ENCODE measurements at regions of chr9 and their contacts with region 1.

Region 1: GRCh38 chr9:133356391-133357091 is at the starts of genes SURF1 and SURF2:
- DNase-seq: peak; percentile 94
- ATAC-seq: peak; percentile 92
- H3K4me3 Mint-ChIP-seq: peak within 1 kb of the TSS; percentile 90
- H3K27ac Mint-ChIP-seq: peak within 1 kb of the TSS; percentile 88
- H3K4me1 Mint-ChIP-seq: peaks cover 59% of the 10 kb centered on the region
- H3K27me3 Mint-ChIP-seq: no peaks in the 10 kb centered on the region
- total RNA-seq, gene SURF1: 35.4 to 35.6 TPM
- total RNA-seq, gene SURF2: 14.9 to 23.2 TPM

Region 2: DNA sequence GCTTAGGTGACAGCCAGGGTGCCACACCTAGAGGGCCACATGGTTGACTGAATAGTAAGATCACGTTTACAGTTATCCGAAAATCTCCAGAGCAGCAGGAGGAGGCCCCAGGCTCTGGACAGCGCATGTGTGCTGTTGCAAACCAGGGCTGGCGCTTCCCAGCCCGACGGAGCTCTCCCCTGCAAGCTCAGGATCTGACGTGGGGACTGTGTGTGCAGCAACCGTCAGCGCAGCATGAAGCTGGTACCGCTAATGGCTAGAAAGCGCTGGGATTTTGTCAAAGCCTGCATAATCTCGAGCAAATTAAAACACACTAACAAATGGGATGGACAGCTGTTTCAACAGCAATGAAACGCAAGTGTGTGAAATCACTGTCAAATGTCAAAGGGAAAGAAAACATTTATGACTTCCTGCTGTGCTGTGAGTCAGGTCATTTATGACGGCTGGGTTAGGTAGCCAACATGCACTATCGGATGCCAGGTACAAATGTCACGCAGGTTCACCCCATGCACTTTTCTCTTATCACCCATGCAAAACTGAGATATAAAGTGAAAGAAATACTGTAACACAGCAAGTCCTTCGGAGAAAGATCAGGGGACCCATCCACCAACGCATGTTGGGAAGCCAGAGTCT is 11.8 kb after region 1 on chr9:
- CTCF ChIA-PET with region 1: interaction called, 100 read pairs
- DNase-seq: no peak
- ATAC-seq: no peak
- H3K4me3 Mint-ChIP-seq: peak overlapping the region; percentile 95
- H3K27ac Mint-ChIP-seq: peak overlapping the region; percentile 100
- H3K4me1 Mint-ChIP-seq: peaks cover 83% of the 10 kb centered on the region
- H3K27me3 Mint-ChIP-seq: no peaks in the 10 kb centered on the region

Region 3: DNA sequence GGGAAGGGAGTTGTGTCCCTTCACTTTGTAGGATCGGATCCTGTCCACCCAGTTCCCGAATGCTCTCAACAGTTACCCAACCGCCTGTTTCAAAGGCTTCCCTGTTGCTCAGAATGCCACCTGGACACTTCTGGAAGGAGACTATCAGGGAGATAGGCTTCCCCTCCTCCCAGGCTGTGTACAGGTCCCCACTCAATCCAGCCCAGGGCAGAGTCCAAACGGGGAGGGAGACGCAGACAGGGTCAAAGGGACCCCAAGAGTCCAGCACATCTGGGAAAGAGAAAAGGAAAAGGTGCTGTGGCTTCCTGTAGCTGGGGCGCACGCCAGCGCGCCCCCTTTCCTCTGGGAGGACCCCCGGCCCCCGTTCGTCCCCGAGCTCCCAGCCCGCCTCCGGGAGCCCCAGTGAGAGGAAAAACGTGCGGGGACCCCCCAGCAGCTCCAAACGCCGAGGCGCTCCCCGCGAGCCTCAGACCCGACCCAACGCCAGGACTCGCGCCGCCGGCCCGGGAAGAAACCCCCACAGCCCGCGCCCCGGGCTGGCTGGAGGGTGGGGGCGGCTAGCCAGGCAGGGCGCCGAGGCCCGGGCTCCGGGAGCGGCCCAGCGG is 18.7 kb after region 1 on chr9:
- CTCF ChIA-PET with region 1: interaction called, 100 read pairs
- DNase-seq: peak; percentile 58
- ATAC-seq: peak; percentile 3
- H3K4me3 Mint-ChIP-seq: peak overlapping the region; percentile 95
- H3K27ac Mint-ChIP-seq: peak overlapping the region; percentile 100
- H3K4me1 Mint-ChIP-seq: peaks cover 41% of the 10 kb centered on the region
- H3K27me3 Mint-ChIP-seq: peaks cover 2% of the 10 kb centered on the region

Region 4: DNA sequence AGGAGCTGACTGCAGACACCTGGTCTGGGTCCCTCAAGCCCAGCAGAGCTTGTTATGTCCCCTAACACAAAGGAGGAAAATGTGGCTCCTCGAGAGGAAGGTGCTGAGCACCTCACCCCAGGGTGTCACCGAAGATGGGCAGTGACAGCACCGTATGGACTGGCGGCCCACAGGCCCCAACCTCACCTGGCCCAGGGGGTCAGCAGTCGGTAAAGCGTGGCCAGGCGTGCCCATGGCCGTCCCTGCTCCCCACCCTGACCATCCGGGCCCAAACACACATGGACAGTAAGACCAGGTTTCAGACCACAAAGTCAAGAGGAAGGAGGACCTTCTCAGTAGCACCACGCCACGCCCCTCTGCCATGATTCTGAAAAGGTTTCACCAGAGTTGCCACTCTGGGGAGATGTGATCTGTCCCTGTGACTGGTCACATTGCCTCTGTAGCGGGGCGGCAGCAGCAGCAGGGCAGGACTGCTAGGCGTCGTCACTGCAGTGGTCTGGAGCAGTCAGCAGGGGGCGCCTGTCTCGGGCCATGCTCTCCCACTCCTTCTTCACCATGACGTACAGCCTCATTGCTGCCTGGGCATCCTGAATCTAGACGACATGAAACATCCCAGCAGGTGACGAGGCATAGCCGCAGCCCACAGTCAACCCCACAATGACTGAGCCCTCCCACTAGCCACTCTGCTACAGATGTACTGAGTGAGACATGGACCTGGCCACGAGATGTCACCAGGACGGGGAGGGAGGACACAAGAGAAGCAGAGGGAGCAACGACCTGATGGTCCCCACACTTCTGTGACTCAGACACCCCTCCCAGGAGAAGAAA is 50.2 kb after region 1 on chr9:
- CTCF ChIA-PET with region 1: interaction called, 14 read pairs
- DNase-seq: peak; percentile 89
- ATAC-seq: peak; percentile 92
- H3K4me3 Mint-ChIP-seq: no peak overlapping the region
- H3K27ac Mint-ChIP-seq: peak overlapping the region; percentile 67
- H3K4me1 Mint-ChIP-seq: peaks cover 17% of the 10 kb centered on the region
- H3K27me3 Mint-ChIP-seq: no peaks in the 10 kb centered on the region

Measured in activated CD8-positive, alpha-beta memory T cell treated with anti-CD3 and anti-CD28 coated beads, Interleukin-2, amount 10 ng/mL, durations not matched to agents 7 days and 5 days (primary cell).